ENCODE measurements at regions of chr17 and their contacts with region 1.

Region 1: GRCh38 chr17:34961093-34961911 is at the starts of genes CCT6B and ZNF830:
- DNase-seq: peak; percentile 90 to 93
- H3K4me3 ChIP-seq: peak within 1 kb of the TSS; percentile 74
- H3K4me3 Mint-ChIP-seq: peak within 1 kb of the TSS; percentile 94
- H3K27ac Mint-ChIP-seq: peak within 1 kb of the TSS; percentile 99
- H3K4me1 ChIP-seq: peaks cover 12% of the 10 kb centered on the region
- H3K4me1 Mint-ChIP-seq: peaks cover 14% of the 10 kb centered on the region
- H3K27me3 ChIP-seq: no peaks in the 10 kb centered on the region
- H3K27me3 Mint-ChIP-seq: peaks cover 11% of the 10 kb centered on the region
- CTCF ChIP-seq: no peak
- total RNA-seq, gene CCT6B: 1.5 and 1.8 TPM in 2 replicates
- total RNA-seq, gene ZNF830: 24.3 and 25.0 TPM in 2 replicates

Region 2: GRCh38 chr17:34874478-34874877 is 86.8 kb before region 1 on chr17:
- CTCF ChIA-PET with region 1: no interaction called
- POLR2A ChIA-PET with region 1: no interaction called
- intact Hi-C with region 1: no loop called
- DNase-seq: no peak
- H3K4me3 ChIP-seq: no peak overlapping the region
- H3K4me3 Mint-ChIP-seq: no peak overlapping the region
- H3K27ac Mint-ChIP-seq: no peak overlapping the region
- H3K4me1 ChIP-seq: no peaks in the 10 kb centered on the region
- H3K4me1 Mint-ChIP-seq: no peaks in the 10 kb centered on the region
- H3K27me3 ChIP-seq: no peaks in the 10 kb centered on the region
- H3K27me3 Mint-ChIP-seq: peaks cover 18% of the 10 kb centered on the region
- CTCF ChIP-seq: no peak

Region 3: DNA sequence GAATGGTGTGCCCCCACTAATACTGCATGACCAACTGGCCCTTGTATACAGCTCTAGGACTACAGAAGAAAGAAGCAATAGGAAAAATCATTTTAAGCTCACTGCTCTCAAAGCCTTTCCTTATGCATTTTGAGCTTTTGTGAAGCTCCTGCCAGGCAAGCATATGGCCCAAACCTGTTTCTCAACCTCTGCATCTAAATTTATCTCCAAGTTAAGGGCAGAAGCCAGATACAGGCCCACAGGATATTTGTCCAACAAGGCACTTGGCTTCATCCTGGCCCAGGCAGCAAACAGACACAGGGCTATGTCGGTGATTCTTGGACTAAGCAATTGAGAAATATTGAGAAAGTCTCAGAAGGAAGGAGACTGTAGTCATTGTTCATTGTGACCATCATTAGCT is 43.9 kb before region 1 on chr17:
- CTCF ChIA-PET with region 1: no interaction called
- POLR2A ChIA-PET with region 1: no interaction called
- intact Hi-C with region 1: no loop called
- DNase-seq: no peak
- H3K4me3 ChIP-seq: no peak overlapping the region
- H3K4me3 Mint-ChIP-seq: no peak overlapping the region
- H3K27ac Mint-ChIP-seq: no peak overlapping the region
- H3K4me1 ChIP-seq: no peaks in the 10 kb centered on the region
- H3K4me1 Mint-ChIP-seq: no peaks in the 10 kb centered on the region
- H3K27me3 ChIP-seq: no peaks in the 10 kb centered on the region
- H3K27me3 Mint-ChIP-seq: peaks cover 11% of the 10 kb centered on the region
- CTCF ChIP-seq: no peak

Region 4: DNA sequence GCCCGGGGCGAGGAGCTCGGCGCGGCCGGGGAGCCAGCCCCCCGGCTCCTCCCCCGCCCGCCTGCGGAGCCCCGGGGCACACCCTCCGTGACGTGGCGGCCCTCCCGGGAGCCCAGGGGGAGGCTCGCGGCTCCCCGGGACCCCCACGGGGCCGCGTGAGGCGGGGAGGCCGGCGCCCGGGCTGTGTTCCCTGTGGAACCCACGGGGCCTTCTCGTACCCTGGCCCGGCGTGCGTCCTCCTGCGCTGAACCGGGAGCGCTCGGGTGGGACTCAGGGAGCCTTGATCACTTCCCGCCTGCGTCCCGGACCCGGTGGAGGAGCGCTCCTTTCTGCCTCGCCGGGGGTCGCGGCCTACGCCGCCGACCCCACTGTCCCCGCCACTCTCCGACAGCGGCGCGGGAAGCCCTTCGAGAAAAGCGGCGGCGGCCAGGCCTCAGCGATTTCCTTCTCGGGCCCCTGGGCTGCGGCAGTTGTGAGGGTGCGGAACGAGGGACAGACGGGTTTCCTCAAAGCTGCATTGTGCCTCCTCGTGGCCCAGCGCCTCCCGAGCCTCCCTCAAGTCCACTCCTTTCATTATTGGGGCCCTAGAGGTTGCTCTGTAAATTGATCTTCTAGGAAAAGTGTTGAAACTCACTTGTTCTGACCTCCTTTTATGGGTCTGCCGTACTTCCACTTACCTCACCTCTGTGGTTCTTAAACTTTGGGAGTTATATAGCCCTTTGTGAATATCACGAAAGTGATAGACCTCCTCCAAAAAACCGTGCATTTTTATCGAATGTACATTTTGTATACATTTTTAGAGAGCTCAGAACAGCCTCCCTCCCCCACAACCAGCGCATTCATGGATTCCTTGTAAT is 19.6 kb after region 1 on chr17:
- CTCF ChIA-PET with region 1: no interaction called
- POLR2A ChIA-PET with region 1: interaction called, 11 read pairs
- intact Hi-C with region 1: no loop called
- DNase-seq: peak; percentile 85 to 86
- H3K4me3 ChIP-seq: peak overlapping the region; percentile 75
- H3K4me3 Mint-ChIP-seq: peak overlapping the region; percentile 85
- H3K27ac Mint-ChIP-seq: peak overlapping the region; percentile 93
- H3K4me1 ChIP-seq: 0 out of 2 replicates have a peak, but pooled peaks cover 10% of the 10 kb centered on the region
- H3K4me1 Mint-ChIP-seq: peaks cover 10% of the 10 kb centered on the region
- H3K27me3 ChIP-seq: no peaks in the 10 kb centered on the region
- H3K27me3 Mint-ChIP-seq: no peaks in the 10 kb centered on the region
- CTCF ChIP-seq: peak; percentile 46 to 71

Region 5: DNA sequence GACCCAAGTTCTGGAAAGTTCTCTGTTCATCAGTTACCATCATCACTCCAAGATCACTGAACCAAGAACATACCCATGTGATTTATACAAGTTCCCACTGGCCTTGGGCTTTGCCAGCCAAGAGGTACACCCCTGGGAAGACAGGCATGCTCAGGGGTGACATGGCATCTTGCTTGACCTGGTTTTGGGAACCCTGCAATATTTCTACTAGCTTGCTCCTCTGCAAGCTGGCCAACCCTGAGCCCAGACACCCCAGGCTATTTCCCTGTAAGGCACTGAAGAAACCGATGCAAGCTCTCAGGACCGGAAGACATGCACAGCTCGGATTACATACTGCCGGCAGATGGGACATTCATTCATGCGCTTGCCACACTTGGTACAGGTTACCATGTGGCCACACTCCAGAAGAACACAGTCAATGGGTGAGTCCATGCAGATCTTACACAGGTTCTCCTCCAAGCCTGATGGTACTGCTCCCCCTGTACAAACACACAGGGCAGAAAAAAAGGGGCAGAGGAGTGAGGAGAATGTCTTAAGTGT is 50.4 kb after region 1 on chr17:
- CTCF ChIA-PET with region 1: no interaction called
- POLR2A ChIA-PET with region 1: no interaction called
- intact Hi-C with region 1: no loop called
- DNase-seq: no peak
- H3K4me3 ChIP-seq: no peak overlapping the region
- H3K4me3 Mint-ChIP-seq: no peak overlapping the region
- H3K27ac Mint-ChIP-seq: no peak overlapping the region
- H3K4me1 ChIP-seq: no peaks in the 10 kb centered on the region
- H3K4me1 Mint-ChIP-seq: peaks cover 7% of the 10 kb centered on the region
- H3K27me3 ChIP-seq: no peaks in the 10 kb centered on the region
- H3K27me3 Mint-ChIP-seq: no peaks in the 10 kb centered on the region
- CTCF ChIP-seq: no peak

Region 6: GRCh38 chr17:35119368-35120165 is 158.3 kb after region 1 on chr17 and contains the start of gene RAD51D:
- CTCF ChIA-PET with region 1: no interaction called
- POLR2A ChIA-PET with region 1: no interaction called
- intact Hi-C with region 1: no loop called
- DNase-seq: peak; percentile 86 to 91
- H3K4me3 ChIP-seq: peak within 1 kb of the TSS; percentile 70
- H3K4me3 Mint-ChIP-seq: peak within 1 kb of the TSS; percentile 75
- H3K27ac Mint-ChIP-seq: peak within 1 kb of the TSS; percentile 40
- H3K4me1 ChIP-seq: peaks cover 5% of the 10 kb centered on the region
- H3K4me1 Mint-ChIP-seq: no peaks in the 10 kb centered on the region
- H3K27me3 ChIP-seq: no peaks in the 10 kb centered on the region
- H3K27me3 Mint-ChIP-seq: no peaks in the 10 kb centered on the region
- CTCF ChIP-seq: peak; percentile 74 to 97
- total RNA-seq, gene RAD51D: 31.8 and 31.9 TPM in 2 replicates